Activated CD4-positive, alpha-beta T cell treated with anti-CD3 and anti-CD28 coated beads for 36 hours (primary cell): ENCODE measurements at regions of chr9 and their contacts with region 1.

Region 1: DNA sequence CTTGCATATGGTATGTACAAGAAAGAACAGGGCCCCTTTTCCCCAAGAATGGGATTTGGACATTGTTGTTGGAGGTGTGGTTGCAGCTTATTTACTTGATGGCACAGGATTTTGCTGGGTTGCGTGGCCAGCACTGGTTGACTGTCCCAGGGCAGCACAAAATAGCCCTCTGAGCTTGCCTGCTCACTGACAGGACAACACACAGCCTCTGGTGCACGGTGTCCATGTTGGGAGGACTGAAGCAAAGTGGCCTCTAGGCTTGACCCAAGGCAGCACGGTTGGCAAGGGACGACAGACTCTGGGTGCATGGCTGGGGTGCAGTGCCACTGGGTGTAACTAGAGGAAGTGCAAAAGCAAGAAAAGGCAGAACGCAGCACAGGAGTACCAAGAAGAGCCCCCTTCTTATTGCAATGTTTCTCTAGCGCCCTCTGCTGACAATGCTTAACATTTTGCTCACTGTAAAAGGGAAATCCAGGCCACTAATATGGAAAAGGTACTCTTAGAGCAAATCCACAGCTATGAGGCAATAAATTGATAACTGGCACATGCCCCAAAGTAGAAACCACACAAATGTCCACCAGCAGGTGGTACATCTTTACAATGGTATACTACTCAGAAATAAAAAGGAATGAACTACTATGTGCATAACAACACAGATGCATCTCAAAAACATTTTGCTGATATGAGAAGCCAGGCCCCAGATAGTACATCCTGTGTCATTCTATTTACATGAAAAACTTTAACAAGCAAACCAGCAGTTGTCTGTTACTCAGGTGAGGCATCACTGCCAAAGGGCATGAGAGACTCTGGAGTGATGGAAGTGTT is 47.4 kb upstream of the BARX1 start:
- DNase-seq: peak; percentile 57
- ATAC-seq: peak; percentile 57
- H3K4me3 Mint-ChIP-seq: no peak overlapping the region
- H3K27ac Mint-ChIP-seq: no peak overlapping the region
- H3K4me1 Mint-ChIP-seq: no peaks in the 10 kb centered on the region
- H3K27me3 Mint-ChIP-seq: peaks cover 6% of the 10 kb centered on the region

Region 2: DNA sequence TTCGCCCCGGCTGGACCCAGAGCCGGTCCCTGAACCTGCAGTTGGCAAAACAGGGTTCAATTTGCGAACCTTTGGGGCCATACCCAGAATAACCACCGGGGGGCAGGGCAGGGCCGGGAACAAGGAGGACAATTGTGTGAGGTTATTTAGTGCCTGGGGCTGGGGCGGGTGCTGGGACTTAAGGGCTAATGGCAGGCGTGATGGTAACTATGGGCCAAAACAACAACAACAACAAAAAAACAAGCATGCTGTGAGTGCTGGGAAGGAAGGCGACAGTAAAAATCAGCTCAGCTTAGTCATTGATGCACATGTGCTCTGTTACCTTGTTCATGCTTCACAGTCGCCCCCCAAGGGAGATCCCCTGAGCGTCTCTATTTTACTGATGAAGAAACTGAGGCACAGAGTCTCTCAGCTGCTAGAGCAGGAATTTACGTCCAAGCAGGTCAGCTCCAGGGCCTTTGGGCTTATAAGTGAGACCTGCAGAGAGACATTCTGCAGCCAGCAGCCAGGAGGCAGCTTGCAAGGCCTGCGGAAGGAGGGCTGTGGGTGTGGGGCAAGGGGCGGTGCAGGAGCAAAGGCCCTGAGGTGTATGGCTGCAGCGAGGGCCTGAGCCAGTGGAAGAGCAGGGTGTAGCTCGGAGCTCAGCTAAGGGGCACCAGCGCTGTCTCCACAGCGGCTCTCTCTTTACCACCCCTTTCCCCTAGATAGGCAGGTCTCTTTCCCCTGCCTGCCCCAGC is 320.1 kb before region 1 on chr9:
- CTCF ChIA-PET with region 1: no interaction called
- POLR2A ChIA-PET with region 1: no interaction called
- intact Hi-C with region 1: loop called in 1 of 2 experiments (anchors 1 kb)
- DNase-seq: peak; percentile 81
- ATAC-seq: peak; percentile 73
- H3K4me3 Mint-ChIP-seq: no peak overlapping the region
- H3K27ac Mint-ChIP-seq: peak overlapping the region; percentile 37
- H3K4me1 Mint-ChIP-seq: no peaks in the 10 kb centered on the region
- H3K27me3 Mint-ChIP-seq: no peaks in the 10 kb centered on the region

Region 3: DNA sequence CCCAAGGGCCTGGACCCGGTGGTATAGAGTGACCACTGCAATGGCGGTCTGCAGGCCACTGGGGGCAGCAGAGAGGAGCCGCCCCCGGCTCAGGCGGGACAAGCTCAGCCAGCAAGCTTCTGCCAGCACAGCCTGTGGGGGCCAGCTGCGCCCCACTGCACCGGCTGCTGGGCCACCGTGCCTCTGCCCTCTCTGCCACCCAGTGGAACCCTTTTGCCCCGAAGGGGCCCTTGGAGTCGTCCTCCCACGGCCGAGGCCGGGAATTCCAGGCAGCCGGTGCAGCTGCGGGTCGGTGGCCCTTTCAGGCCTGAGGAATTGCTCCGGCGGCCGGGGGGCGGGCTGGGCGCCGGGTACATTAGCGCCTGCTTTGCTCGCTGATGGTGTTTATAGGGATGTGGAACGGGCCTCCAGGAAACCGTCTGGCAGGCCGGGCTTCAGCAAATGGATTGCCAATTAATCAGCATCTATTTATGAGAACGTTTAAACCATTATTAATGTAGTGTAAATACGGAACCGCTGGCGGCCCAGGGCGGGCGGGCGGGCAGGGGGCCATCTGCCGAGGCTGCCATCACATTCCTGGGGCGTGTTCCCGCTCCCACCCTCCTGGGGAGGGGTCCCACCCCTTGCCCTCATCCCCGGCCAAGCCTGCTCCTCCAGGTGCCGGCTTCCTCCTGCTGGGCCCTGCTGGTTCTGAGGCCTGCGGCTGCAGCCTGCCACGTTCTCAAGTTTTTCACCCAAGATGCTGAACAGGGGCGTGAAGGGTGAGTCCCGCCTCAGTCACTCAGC is 174.8 kb before region 1 on chr9:
- CTCF ChIA-PET with region 1: interaction called, 6 read pairs
- POLR2A ChIA-PET with region 1: no interaction called
- intact Hi-C with region 1: loop called in 1 of 2 experiments (anchors 1 kb)
- DNase-seq: peak; percentile 67
- ATAC-seq: peak; percentile 88
- H3K4me3 Mint-ChIP-seq: no peak overlapping the region
- H3K27ac Mint-ChIP-seq: no peak overlapping the region
- H3K4me1 Mint-ChIP-seq: peaks cover 8% of the 10 kb centered on the region
- H3K27me3 Mint-ChIP-seq: peaks cover 28% of the 10 kb centered on the region

Region 4: GRCh38 chr9:93978551-93978950 is 24.0 kb before region 1 on chr9:
- CTCF ChIA-PET with region 1: no interaction called
- POLR2A ChIA-PET with region 1: no interaction called
- intact Hi-C with region 1: no loop called
- DNase-seq: no peak
- ATAC-seq: no peak
- H3K4me3 Mint-ChIP-seq: no peak overlapping the region
- H3K27ac Mint-ChIP-seq: peak overlapping the region; percentile 23
- H3K4me1 Mint-ChIP-seq: no peaks in the 10 kb centered on the region
- H3K27me3 Mint-ChIP-seq: peaks cover 17% of the 10 kb centered on the region

Region 5: GRCh38 chr9:94014065-94014654 is 11.6 kb after region 1 on chr9:
- CTCF ChIA-PET with region 1: interaction called, 45 read pairs
- POLR2A ChIA-PET with region 1: no interaction called
- intact Hi-C with region 1: no loop called
- DNase-seq: no peak
- ATAC-seq: no peak
- H3K4me3 Mint-ChIP-seq: no peak overlapping the region
- H3K27ac Mint-ChIP-seq: no peak overlapping the region
- H3K4me1 Mint-ChIP-seq: peaks cover 18% of the 10 kb centered on the region
- H3K27me3 Mint-ChIP-seq: no peaks in the 10 kb centered on the region

Region 6: DNA sequence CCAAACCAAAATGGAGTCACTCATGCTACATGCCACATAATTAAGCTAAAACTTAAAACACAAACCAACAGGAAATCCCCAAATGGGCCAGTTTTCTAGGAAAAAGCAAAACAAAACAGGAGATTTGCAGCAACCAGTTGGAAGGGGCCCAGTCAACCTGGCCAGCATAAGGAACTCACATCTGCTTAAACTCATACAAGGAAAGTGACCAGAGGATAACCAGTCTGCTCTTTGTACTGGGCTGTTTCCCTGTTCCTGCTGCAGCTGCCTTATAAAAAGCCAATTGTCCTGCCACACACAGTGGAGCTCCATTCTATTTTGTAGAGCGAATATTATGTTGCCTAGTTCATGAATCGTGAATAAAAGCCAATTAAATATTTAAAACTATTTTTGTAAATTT is 52.2 kb after region 1 on chr9:
- CTCF ChIA-PET with region 1: no interaction called
- POLR2A ChIA-PET with region 1: no interaction called
- intact Hi-C with region 1: no loop called
- DNase-seq: no peak
- ATAC-seq: no peak
- H3K4me3 Mint-ChIP-seq: no peak overlapping the region
- H3K27ac Mint-ChIP-seq: no peak overlapping the region
- H3K4me1 Mint-ChIP-seq: no peaks in the 10 kb centered on the region
- H3K27me3 Mint-ChIP-seq: no peaks in the 10 kb centered on the region